ENCODE measurements at regions of chr11 and their contacts with region 1.

Region 1: DNA sequence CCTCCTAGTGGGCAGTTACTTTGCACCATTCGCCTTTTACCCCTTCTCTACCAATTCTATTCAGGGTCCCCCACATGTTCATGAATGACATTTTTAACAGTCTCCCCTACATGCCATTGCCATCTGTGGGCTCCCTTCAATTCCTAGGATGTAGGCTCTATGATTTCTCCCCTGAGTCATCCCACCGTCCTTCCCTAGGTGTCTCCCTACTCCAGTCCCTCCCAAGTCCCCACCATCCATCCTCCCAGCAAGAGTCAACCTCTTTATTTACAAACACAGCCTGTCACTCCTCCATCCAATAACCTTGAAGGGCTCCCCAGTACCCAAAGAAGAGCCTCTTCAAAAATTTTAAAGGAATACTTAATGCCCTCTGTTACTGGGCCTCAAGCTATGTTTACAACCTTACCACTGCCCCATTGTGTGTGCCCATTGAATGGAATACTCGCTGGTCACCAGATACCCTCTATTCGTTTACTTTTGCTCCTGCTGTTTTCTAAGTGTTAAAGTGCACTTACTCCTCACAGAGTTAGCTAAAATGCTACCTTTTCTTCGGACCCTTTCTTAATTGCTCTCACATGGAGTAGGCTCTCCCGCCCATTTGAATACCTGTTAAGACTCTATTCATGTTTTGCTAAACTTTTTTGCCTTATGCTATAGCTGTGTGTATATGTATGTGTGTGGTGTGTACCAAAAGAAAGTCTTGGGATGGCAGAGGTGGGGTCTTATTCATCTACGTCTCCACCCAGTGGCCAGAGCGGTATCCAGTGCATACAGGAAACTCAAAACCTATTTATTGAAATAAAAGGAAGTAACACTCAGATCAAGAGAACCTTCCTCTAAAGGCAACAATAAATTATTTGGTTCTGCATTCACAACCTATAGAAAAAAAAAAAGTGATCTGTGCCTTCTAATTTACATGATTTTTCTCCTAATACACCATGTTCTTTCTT is 235.8 kb upstream of the CCDC90B start:
- DNase-seq: peak; percentile 27
- H3K4me3 Mint-ChIP-seq: no peak overlapping the region
- H3K27ac Mint-ChIP-seq: no peak overlapping the region
- H3K4me1 Mint-ChIP-seq: no peaks in the 10 kb centered on the region
- H3K27me3 Mint-ChIP-seq: peaks cover 10% of the 10 kb centered on the region
- CTCF ChIP-seq: no peak

Region 2: GRCh38 chr11:83671289-83671688 is 149.4 kb after region 1 on chr11:
- CTCF ChIA-PET with region 1: interaction called, 6 read pairs
- POLR2A ChIA-PET with region 1: no interaction called
- intact Hi-C with region 1: loop called (anchors 1 kb)
- DNase-seq: peak; percentile 6
- H3K4me3 Mint-ChIP-seq: no peak overlapping the region
- H3K27ac Mint-ChIP-seq: no peak overlapping the region
- H3K4me1 Mint-ChIP-seq: no peaks in the 10 kb centered on the region
- H3K27me3 Mint-ChIP-seq: peaks cover 62% of the 10 kb centered on the region
- CTCF ChIP-seq: no peak

Region 3: GRCh38 chr11:83724008-83724461 is 202.1 kb after region 1 on chr11:
- CTCF ChIA-PET with region 1: interaction called, 4 read pairs
- POLR2A ChIA-PET with region 1: no interaction called
- intact Hi-C with region 1: loop called (anchors 2 kb)
- DNase-seq: peak; percentile 54
- H3K4me3 Mint-ChIP-seq: peak overlapping the region; percentile 51
- H3K27ac Mint-ChIP-seq: no peak overlapping the region
- H3K4me1 Mint-ChIP-seq: peaks cover 5% of the 10 kb centered on the region
- H3K27me3 Mint-ChIP-seq: peaks cover 53% of the 10 kb centered on the region
- CTCF ChIP-seq: peak; percentile 38